GM12878 (cell line): ENCODE measurements at regions of chr1 and their contacts with region 1.

Region 1: GRCh38 chr1:84753516-84754385 is 63.5 kb upstream of the SSX2IP start:
- DNase-seq: peak; percentile 23
- ATAC-seq: peak; percentile 96
- H3K4me3 ChIP-seq: no peak overlapping the region
- H3K27ac ChIP-seq: no peak overlapping the region
- H3K4me1 ChIP-seq: no peaks in the 10 kb centered on the region
- H3K27me3 ChIP-seq: no peaks in the 10 kb centered on the region
- CTCF ChIP-seq: peak; percentile 90 to 93 (median 92)
- EP300 ChIP-seq: no peak
- POLR2A ChIP-seq: no peak
- RAD21 ChIP-seq: peak; percentile 99

Region 2: GRCh38 chr1:83905315-83905907 is 848.3 kb before region 1 on chr1:
- CTCF ChIA-PET with region 1: interaction called, 5 read pairs
- POLR2A ChIA-PET with region 1: no interaction called
- RAD21 ChIA-PET with region 1: no interaction called
- SMC1A ChIA-PET with region 1: interaction called, 5 read pairs
- in situ Hi-C with region 1: loop called (anchors 25 kb)
- intact Hi-C with region 1: loop called (anchors 5 kb)
- DNase-seq: no peak
- ATAC-seq: peak; percentile 35; the same call in 1 of the 3 replicates
- H3K4me3 ChIP-seq: no peak overlapping the region
- H3K27ac ChIP-seq: no peak overlapping the region
- H3K4me1 ChIP-seq: no peaks in the 10 kb centered on the region
- H3K27me3 ChIP-seq: no peaks in the 10 kb centered on the region
- CTCF ChIP-seq: peak; percentile 42 to 51 (median 46); a peak in 5 of 6 replicates
- EP300 ChIP-seq: no peak
- POLR2A ChIP-seq: no peak
- RAD21 ChIP-seq: peak; percentile 49

Region 3: GRCh38 chr1:84143796-84144565 is 609.8 kb before region 1 on chr1 and contains the start of gene PRKACB:
- CTCF ChIA-PET with region 1: interaction called, 4 read pairs
- POLR2A ChIA-PET with region 1: no interaction called
- RAD21 ChIA-PET with region 1: interaction called, 4 read pairs
- SMC1A ChIA-PET with region 1: interaction called, 3 read pairs
- in situ Hi-C with region 1: loop called (anchors 25 kb)
- intact Hi-C with region 1: loop called (anchors 5 kb)
- DNase-seq: peak; percentile 24
- ATAC-seq: peak; percentile 50; the same call in 2 of the 3 replicates
- H3K4me3 ChIP-seq: no peak within 1 kb of the TSS
- H3K27ac ChIP-seq: no peak within 1 kb of the TSS
- H3K4me1 ChIP-seq: no peaks in the 10 kb centered on the region
- H3K27me3 ChIP-seq: no peaks in the 10 kb centered on the region
- CTCF ChIP-seq: no peak
- EP300 ChIP-seq: no peak
- POLR2A ChIP-seq: no peak
- RAD21 ChIP-seq: no peak
- polyA plus RNA-seq, gene PRKACB: 3.1 to 3.3 TPM

Region 4: DNA sequence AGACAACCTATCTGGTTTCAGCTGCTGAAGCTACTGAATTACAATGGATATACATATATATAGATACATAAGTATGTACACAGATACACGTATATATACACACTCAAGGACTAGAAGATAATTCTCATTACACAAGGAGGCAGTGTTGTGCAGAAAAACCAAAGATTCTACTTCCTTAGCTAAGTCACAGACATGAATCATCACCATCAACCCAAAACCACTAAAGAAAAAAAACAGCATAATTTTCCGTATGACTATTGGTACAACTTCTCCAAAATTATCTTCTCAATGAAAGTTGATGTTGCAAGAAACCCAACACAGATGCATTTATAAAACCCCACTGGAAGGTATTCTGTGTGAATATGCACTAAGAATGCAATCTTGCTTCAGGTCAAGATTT is 311.5 kb before region 1 on chr1:
- CTCF ChIA-PET with region 1: interaction called, 34 read pairs
- POLR2A ChIA-PET with region 1: no interaction called
- RAD21 ChIA-PET with region 1: interaction called, 25 read pairs
- SMC1A ChIA-PET with region 1: interaction called, 18 read pairs
- in situ Hi-C with region 1: loop called (anchors 5 kb)
- intact Hi-C with region 1: loop called (anchors 1 kb)
- DNase-seq: peak; percentile 73
- ATAC-seq: peak; percentile 99
- H3K4me3 ChIP-seq: no peak overlapping the region
- H3K27ac ChIP-seq: no peak overlapping the region
- H3K4me1 ChIP-seq: peaks cover 5% of the 10 kb centered on the region; the same call in 1 of the 2 replicates
- H3K27me3 ChIP-seq: no peaks in the 10 kb centered on the region
- CTCF ChIP-seq: peak; percentile 38 to 78 (median 43); a peak in 4 of 6 replicates
- EP300 ChIP-seq: no peak
- POLR2A ChIP-seq: no peak
- RAD21 ChIP-seq: peak; percentile 88

Region 5: GRCh38 chr1:84668185-84668584 is 85.6 kb before region 1 on chr1:
- CTCF ChIA-PET with region 1: interaction called, 38 read pairs
- POLR2A ChIA-PET with region 1: no interaction called
- RAD21 ChIA-PET with region 1: interaction called, 31 read pairs
- SMC1A ChIA-PET with region 1: interaction called, 31 read pairs
- in situ Hi-C with region 1: no loop called
- intact Hi-C with region 1: loop called (anchors 2 kb)
- DNase-seq: no peak
- ATAC-seq: peak; percentile 72
- H3K4me3 ChIP-seq: no peak overlapping the region
- H3K27ac ChIP-seq: no peak overlapping the region
- H3K4me1 ChIP-seq: no peaks in the 10 kb centered on the region
- H3K27me3 ChIP-seq: no peaks in the 10 kb centered on the region
- CTCF ChIP-seq: peak in 2 of 3 experiments; percentile 38 to 41; a peak in 4 of 6 replicates
- EP300 ChIP-seq: no peak
- POLR2A ChIP-seq: no peak
- RAD21 ChIP-seq: peak; percentile 58

Region 6: GRCh38 chr1:84724128-84724860 is 29.5 kb before region 1 on chr1:
- CTCF ChIA-PET with region 1: interaction called, 9 read pairs
- POLR2A ChIA-PET with region 1: no interaction called
- RAD21 ChIA-PET with region 1: interaction called, 4 read pairs
- SMC1A ChIA-PET with region 1: interaction called, 10 read pairs
- in situ Hi-C with region 1: no loop called
- intact Hi-C with region 1: no loop called
- DNase-seq: no peak
- ATAC-seq: peak; percentile 72
- H3K4me3 ChIP-seq: no peak overlapping the region
- H3K27ac ChIP-seq: no peak overlapping the region
- H3K4me1 ChIP-seq: no peaks in the 10 kb centered on the region
- H3K27me3 ChIP-seq: no peaks in the 10 kb centered on the region
- CTCF ChIP-seq: peak; percentile 42 to 77 (median 72)
- EP300 ChIP-seq: no peak
- POLR2A ChIP-seq: no peak
- RAD21 ChIP-seq: peak; percentile 61

Region 7: DNA sequence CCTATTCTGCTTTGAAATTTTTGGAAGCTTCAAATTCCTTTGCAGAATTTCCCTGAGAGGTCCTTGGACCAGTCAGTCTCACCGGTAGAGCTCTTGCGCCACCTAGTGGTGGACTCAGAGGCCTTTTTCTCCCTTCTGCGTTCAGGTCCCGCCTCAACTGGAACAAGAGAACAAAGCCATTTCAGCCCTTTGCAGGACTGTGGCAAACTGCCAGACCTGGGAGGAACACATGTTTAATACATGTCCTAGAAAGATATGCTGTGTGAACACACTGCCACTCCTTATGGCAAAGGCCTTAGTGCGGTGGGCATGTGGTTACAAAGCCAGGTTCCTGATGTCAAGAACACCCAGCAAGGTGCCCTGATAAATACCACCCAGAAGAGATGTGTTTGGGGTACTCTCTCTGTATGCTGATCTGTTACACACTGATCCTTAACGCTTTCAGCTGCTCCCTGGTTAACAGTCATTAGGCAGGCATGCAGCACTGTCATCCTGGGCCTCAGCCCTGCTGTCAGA is 18.7 kb after region 1 on chr1:
- CTCF ChIA-PET with region 1: interaction called, 41 read pairs
- POLR2A ChIA-PET with region 1: no interaction called
- RAD21 ChIA-PET with region 1: interaction called, 12 read pairs
- SMC1A ChIA-PET with region 1: interaction called, 9 read pairs
- in situ Hi-C with region 1: no loop called
- intact Hi-C with region 1: no loop called
- DNase-seq: no peak
- ATAC-seq: peak; percentile 96
- H3K4me3 ChIP-seq: no peak overlapping the region
- H3K27ac ChIP-seq: no peak overlapping the region
- H3K4me1 ChIP-seq: no peaks in the 10 kb centered on the region
- H3K27me3 ChIP-seq: no peaks in the 10 kb centered on the region
- CTCF ChIP-seq: peak; percentile 78 to 89 (median 87)
- EP300 ChIP-seq: no peak
- POLR2A ChIP-seq: no peak
- RAD21 ChIP-seq: peak; percentile 93

Region 8: GRCh38 chr1:84862810-84863251 is 109.1 kb after region 1 on chr1:
- CTCF ChIA-PET with region 1: no interaction called
- POLR2A ChIA-PET with region 1: no interaction called
- RAD21 ChIA-PET with region 1: no interaction called
- SMC1A ChIA-PET with region 1: no interaction called
- in situ Hi-C with region 1: no loop called
- intact Hi-C with region 1: no loop called
- DNase-seq: peak; percentile 80
- ATAC-seq: peak; percentile 92
- H3K4me3 ChIP-seq: 0 out of 2 replicates have a peak overlapping the region, but pooled peaks have one; percentile 6
- H3K27ac ChIP-seq: no peak overlapping the region
- H3K4me1 ChIP-seq: peaks cover 30% of the 10 kb centered on the region
- H3K27me3 ChIP-seq: no peaks in the 10 kb centered on the region
- CTCF ChIP-seq: no peak
- EP300 ChIP-seq: peak in 1 of 2 experiments; percentile 65; a peak in 2 of 4 replicates
- POLR2A ChIP-seq: no peak
- RAD21 ChIP-seq: peak; percentile 15; the same call in 1 of the 2 replicates